Heart left ventricle (tissue), 16 donors: ENCODE measurements at regions of chrX and their contacts with region 1.

Region 1: DNA sequence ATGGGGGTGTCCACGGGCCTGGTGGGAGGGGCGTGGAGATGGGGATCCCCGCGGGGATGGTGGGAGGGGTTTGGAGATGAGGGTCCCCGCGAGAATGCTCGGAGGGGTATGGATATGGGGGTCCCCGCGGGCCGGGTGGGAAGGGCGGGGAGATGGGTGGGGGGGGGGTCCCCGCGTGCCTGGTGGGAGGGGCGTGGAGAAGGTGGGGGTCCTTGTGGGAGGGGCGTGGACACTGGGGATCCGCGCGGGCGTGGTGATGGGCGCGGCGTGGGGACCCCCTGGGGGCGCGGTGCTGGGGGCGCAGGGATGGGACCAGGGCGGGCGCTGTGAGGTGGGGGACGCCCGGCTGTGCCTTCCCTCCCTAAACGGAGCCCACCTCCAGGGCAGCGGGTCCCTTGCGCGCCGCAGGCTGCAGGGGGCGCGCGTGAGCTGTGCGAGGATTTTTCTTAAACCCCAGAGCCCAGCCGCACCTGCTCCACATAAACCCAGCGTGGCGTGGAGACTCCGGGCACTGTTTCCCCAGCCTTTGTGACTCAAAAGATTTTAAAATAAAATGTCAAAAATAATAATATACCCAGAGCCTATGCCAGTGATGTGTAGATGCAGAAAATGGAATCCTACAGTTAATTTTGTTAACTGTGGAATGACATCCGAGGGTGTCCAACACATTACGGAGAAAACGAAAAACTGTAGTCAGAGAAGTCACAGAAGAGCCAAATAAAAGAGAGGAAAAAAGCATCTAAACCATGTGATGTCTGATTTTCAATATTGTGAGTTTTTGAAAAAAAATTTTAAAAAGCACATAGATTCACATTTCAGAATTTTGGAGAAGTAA is 1.5 kb upstream of the ASMTL start:
- DNase-seq: peak; percentile 82 to 94 (median 84)
- ATAC-seq: peak; percentile 3 to 35 (median 22)
- H3K4me3 ChIP-seq: peak overlapping the region in 11 of 12 donors; percentile 28 to 72 (median 58)
- H3K27ac ChIP-seq: peak overlapping the region in 10 of 12 donors; percentile 34 to 95 (median 62)
- H3K4me1 ChIP-seq: peaks cover 0 to 25% (median 11%) of the 10 kb centered on the region in 12 donors
- H3K27me3 ChIP-seq: no peaks in the 10 kb centered on the region
- CTCF ChIP-seq: peak; percentile 91 to 100 (median 97)
- POLR2A ChIP-seq: no peak

Region 2: DNA sequence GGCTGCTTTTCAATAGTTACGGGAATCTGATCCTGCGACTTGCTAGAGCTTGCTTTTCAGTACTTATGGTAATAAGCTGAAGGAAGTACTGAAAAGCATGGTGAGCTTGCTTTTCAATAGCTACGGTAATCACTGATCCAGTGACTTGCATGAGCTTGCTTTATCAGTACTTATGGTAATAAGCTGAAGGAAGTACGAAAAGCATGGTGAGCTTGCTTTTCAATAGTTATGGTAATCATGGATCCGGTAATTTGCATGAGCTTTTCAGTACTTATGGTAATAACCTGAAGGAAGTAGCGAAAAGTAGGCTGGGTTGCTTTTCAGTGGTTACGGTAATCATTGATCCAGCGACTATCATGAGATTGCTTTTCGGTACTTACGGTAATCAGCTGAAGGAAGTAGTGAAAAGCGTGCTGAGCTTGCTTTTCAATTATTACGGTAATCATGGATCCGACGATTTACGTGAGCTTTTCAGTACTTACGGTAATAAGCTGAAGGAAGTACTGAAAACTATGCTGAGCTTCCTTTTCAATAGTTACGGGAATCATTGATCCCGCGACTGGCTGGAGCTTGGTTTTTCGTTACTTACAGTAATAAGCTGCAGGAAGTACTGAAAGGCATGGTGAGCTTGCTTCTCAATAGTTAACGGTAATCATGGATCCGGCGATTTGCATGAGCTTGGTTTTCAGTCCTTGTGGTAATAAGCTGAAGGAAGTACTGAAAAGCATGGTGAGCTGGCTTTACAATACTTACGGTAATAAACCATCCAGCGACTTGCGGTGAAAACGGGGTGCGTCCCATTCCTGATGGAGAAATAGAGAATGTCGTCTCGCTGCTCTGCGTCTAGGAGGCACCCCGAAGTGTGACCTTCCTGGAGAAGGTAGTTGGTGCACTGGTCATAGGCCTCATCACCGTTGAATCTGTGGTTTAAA is 248.2 kb before region 1 on chrX:
- intact Hi-C with region 1: no loop called
- DNase-seq: peak in 1 of 5 donors; percentile 10
- ATAC-seq: peak; percentile 56 to 83 (median 69)
- H3K4me3 ChIP-seq: peak overlapping the region in 10 of 12 donors; percentile 37 to 58 (median 46)
- H3K27ac ChIP-seq: peak overlapping the region in 1 of 12 donors; percentile 25
- H3K4me1 ChIP-seq: peaks cover 0 to 19% (median 9%) of the 10 kb centered on the region in 12 donors
- H3K27me3 ChIP-seq: no peaks in the 10 kb centered on the region
- CTCF ChIP-seq: no peak
- POLR2A ChIP-seq: no peak

Region 3: GRCh38 chrX:1391707-1392375 is 62.3 kb before region 1 on chrX and contains the start of gene SLC25A6:
- intact Hi-C with region 1: loop called in 8 of 10 experiments (anchors 2 to 10 kb)
- DNase-seq: peak; percentile 99 to 100 (median 99)
- ATAC-seq: peak; percentile 95 to 96 (median 96)
- H3K4me3 ChIP-seq: peak within 1 kb of the TSS; percentile 78 to 100 (median 95)
- H3K27ac ChIP-seq: peak within 1 kb of the TSS; percentile 97 to 100 (median 99)
- H3K4me1 ChIP-seq: peaks cover 4 to 58% (median 45%) of the 10 kb centered on the region in 12 donors
- H3K27me3 ChIP-seq: no peaks in the 10 kb centered on the region
- CTCF ChIP-seq: peak in 5 of 12 donors; percentile 8 to 46 (median 28)
- POLR2A ChIP-seq: peak; percentile 90 to 96
- total RNA-seq, gene SLC25A6: 109 to 197 (median 129) TPM

Region 4: DNA sequence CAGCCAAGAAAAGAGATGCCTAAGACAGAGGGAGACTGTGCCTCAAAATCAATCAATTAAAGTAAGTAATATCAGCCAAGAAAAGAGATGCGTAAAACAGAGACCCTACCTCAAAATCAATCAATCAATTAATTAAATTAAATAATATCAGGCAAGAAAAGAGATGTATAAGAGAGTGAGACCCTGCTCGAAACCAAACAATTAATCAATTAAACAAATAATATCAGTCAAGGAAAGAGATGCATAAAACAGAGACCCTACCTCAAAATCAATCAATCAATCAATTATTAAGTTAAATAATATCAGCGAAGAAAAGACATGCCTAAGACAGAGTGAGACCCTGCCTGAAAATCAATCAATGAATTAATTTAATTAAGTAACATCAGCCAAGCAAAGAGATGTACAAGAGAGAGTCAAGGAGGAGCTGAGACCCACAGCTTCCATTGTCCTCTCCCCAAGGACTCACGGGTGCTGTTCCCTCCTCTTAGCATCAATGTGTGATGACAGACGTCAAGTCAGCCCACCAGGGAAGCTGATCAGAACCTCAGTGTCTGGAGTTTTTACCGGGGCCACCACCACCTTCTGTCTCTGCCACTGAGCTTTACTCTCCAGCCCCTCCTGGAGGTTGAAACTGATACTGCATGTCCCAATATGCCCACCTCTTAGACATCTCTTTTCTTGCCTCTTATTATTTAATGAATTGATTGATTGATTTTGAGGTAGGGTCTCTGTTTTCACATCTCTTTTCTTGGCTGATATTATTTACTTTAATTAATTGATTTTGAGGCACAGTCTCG is 126.8 kb after region 1 on chrX:
- intact Hi-C with region 1: loop called in 7 of 10 experiments (anchors 1 to 5 kb)
- DNase-seq: peak in 1 of 5 donors; percentile 56
- ATAC-seq: peak in 2 of 4 donors; percentile 52 to 61
- H3K4me3 ChIP-seq: no peak overlapping the region
- H3K27ac ChIP-seq: no peak overlapping the region
- H3K4me1 ChIP-seq: peaks cover 0 to 7% (median 0%) of the 10 kb centered on the region in 12 donors
- H3K27me3 ChIP-seq: no peaks in the 10 kb centered on the region
- CTCF ChIP-seq: peak; percentile 67 to 89 (median 78)
- POLR2A ChIP-seq: no peak

Region 5: DNA sequence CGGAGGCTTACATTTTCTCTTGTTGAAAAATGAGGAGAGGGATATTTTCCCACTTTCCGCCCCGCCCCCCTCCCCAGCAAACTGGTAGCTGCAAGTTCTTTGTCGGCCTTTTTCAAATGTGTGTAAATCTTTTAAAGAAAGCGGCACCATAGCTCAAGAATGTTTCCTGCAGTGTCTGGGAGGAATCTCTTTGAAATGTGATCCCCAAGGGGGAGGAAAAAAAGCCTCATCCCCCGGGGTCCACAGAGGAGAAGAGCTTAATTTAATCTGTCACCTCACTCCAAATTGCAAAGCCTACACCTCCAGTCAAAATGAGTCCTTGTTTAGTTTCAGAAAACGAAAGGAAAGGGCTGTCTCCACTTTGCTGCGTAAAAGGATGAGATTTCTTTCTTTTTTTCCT is 195.5 kb after region 1 on chrX:
- intact Hi-C with region 1: loop called in 1 of 10 experiments (anchors 10 kb)
- DNase-seq: no peak
- ATAC-seq: no peak
- H3K4me3 ChIP-seq: no peak overlapping the region
- H3K27ac ChIP-seq: no peak overlapping the region
- H3K4me1 ChIP-seq: no peaks in the 10 kb centered on the region
- H3K27me3 ChIP-seq: peaks cover 0 to 12% (median 0%) of the 10 kb centered on the region in 9 donors
- CTCF ChIP-seq: no peak
- POLR2A ChIP-seq: no peak

Region 6: DNA sequence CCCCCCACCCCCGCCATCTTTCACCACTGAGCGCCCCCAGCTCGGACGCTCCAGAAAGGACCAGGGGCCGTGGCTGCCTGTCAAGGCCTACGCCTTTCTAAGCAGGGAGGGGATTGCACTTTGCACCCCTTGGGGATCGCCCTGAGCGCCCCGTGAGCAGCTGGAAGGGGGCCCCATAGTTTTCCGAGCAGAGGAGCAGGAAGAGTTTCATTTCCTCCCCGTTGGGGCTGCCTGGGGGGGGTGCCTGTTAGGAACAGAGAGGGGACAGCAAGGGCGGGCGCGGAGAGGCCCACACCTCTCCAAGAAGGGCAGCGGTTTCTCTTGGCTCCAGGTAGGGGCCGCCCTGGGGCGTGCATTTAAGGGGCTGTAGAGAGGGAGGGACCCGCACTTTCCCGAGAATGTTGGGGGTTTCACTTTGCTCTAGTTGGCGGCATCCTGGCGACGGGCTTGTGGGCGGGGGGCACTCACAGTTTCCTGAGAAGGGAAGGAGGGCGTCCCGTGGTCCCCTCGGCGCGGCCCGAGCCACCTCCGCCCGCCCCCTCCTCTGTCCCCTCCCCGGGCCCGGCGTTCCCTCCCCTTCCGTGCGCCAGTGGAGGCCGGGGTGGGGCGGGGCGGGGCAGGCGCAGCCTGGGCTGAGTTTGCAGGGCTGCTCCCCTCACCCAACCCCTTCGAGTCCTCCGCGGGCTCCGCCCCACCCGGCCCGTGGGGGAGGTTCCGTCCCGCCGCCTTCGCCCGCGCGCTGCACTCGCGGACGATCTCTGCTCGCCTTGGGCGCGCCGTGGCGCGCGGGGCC is 1154.7 kb after region 1 on chrX:
- intact Hi-C with region 1: loop called in 3 of 10 experiments (anchors 5 to 10 kb)
- DNase-seq: peak; percentile 89 to 95 (median 89)
- ATAC-seq: peak; percentile 91 to 99 (median 98)
- H3K4me3 ChIP-seq: peak overlapping the region; percentile 40 to 93 (median 76)
- H3K27ac ChIP-seq: peak overlapping the region; percentile 5 to 87 (median 73)
- H3K4me1 ChIP-seq: peaks cover 0 to 31% (median 6%) of the 10 kb centered on the region in 12 donors
- H3K27me3 ChIP-seq: no peaks in the 10 kb centered on the region
- CTCF ChIP-seq: peak in 1 of 12 donors; percentile 8
- POLR2A ChIP-seq: peak in 1 of 2 donors; percentile 40

Region 7: GRCh38 chrX:2819345-2820135 is 1365.4 kb after region 1 on chrX:
- intact Hi-C with region 1: loop called in 1 of 10 experiments (anchors 10 kb)
- DNase-seq: no peak
- ATAC-seq: no peak
- H3K4me3 ChIP-seq: no peak overlapping the region
- H3K27ac ChIP-seq: no peak overlapping the region
- H3K4me1 ChIP-seq: no peaks in the 10 kb centered on the region
- H3K27me3 ChIP-seq: peaks cover 0 to 6% (median 0%) of the 10 kb centered on the region in 9 donors
- CTCF ChIP-seq: peak; percentile 13 to 54 (median 40)
- POLR2A ChIP-seq: no peak